Posterior vena cava (tissue), 2 donors: ENCODE measurements at regions of chr1 and their contacts with region 1.

Region 1: GRCh38 chr1:91929250-91929649 is 20.0 kb upstream of the BRDT start:
- DNase-seq: no peak

Region 2: GRCh38 chr1:91511386-91511785 is 417.9 kb before region 1 on chr1:
- intact Hi-C with region 1: loop called (anchors 5 kb)
- DNase-seq: no peak

Region 3: DNA sequence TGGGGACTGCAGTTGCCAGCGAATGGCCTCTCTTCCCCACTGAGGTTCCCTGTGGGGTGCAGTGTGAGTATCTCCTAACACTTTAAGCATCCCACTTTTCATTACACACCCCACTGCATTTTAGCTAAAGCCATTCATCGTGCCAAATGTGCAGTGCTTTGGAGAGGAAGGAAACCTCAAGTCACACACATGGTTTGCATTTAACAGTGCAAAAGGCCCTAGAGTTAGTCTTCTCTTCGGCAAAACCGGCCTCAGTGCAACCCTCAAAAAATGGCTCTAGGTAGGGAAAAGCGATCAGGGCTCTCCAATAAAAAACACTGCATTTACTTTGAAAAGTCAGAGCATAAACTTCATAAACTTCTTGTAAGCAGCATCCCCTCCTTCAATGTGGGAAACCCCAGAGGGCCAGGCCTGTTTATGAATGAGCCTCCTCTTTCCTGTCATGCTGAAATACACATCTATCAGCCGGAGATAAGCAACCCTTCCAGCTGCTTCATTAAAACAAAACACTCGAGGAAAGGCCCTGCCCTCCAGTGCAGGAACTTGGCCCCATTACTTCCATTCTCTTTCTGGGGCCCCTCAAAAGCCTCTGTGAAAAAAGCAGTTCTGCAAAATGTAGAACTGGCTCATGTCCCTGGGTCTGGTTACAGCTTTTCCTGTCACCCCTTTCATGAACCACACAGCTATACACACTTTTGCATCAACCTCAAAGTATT is 244.6 kb before region 1 on chr1:
- intact Hi-C with region 1: no loop called
- DNase-seq: no peak

Region 4: GRCh38 chr1:91795591-91796389 is 133.5 kb before region 1 on chr1:
- intact Hi-C with region 1: loop called in 1 of 2 experiments (anchors 5 kb)
- DNase-seq: no peak